IMR-90 (cell line): ENCODE measurements at regions of chr2 and their contacts with region 1.

Region 1: GRCh38 chr2:156511803-156512202 is 75.6 kb downstream of the GPD2 start:
- DNase-seq: no peak
- ATAC-seq: no peak
- H3K4me3 ChIP-seq: no peak overlapping the region
- H3K27ac ChIP-seq: no peak overlapping the region
- H3K4me1 ChIP-seq: peaks cover 6% of the 10 kb centered on the region
- H3K27me3 ChIP-seq: no peaks in the 10 kb centered on the region
- CTCF ChIP-seq: no peak
- POLR2A ChIP-seq: no peak
- RAD21 ChIP-seq: no peak

Region 2: GRCh38 chr2:156483741-156484176 is 28.0 kb before region 1 on chr2:
- CTCF ChIA-PET with region 1: no interaction called
- POLR2A ChIA-PET with region 1: interaction called, 20 read pairs
- dilution Hi-C with region 1: no loop called
- in situ Hi-C with region 1: no loop called
- intact Hi-C with region 1: no loop called
- DNase-seq: no peak
- ATAC-seq: no peak
- H3K4me3 ChIP-seq: no peak overlapping the region
- H3K27ac ChIP-seq: no peak overlapping the region
- H3K4me1 ChIP-seq: no peaks in the 10 kb centered on the region; the same call in 1 of the 2 replicates
- H3K27me3 ChIP-seq: no peaks in the 10 kb centered on the region
- CTCF ChIP-seq: no peak
- POLR2A ChIP-seq: no peak
- RAD21 ChIP-seq: no peak